Activated CD8-positive, alpha-beta T cell treated with anti-CD3 and anti-CD28 coated beads for 36 hours (primary cell): ENCODE measurements at regions of chr2 and their contacts with region 1.

Region 1: DNA sequence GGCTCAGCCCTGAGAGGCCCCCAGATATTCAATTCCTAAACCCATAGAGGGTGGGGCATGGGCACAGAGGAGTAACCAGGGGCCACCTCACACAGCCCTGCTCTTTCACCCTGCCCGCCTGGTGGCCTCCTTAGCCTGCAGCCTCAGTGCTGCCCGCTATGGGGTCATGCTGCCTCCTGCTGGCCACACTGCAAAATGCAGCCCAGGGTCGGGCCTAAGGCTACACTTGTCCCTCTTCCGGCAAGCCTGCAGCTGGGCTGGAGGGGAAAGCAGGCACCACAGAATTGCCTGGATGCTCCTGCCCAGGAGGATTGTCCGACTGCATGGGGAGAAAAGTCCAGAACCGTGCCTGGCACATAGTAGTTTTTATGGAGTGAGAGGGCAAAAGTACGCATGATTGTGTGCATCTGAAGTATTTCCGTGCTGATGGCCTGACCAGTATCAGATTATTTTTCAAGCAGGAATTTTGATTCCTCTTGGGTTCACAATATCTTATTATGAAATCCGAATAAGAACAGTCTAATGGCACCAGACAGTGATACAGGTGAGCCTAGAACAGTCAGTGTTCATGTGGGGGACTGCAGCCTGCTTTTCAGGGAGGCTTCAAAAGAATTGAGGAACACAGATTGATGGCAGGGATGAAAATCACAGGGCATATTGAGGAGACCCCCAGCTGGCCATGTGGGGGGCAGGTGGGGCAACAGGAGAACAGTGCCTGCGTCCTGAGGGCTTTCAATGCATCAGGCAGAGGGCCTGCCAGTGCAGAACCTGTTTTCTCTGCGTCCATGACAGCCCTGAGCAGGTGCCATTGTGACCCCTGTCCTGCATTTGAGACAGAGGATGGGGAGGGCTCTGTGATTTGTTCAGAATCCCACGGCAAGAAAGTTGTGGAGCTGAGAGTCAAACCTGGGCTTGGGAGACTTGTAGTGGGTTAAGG is 51.2 kb upstream of the ALPP start:
- DNase-seq: peak; percentile 90
- ATAC-seq: peak; percentile 84
- H3K4me3 Mint-ChIP-seq: no peak overlapping the region
- H3K27ac Mint-ChIP-seq: no peak overlapping the region
- H3K4me1 Mint-ChIP-seq: peaks cover 27% of the 10 kb centered on the region
- H3K27me3 Mint-ChIP-seq: no peaks in the 10 kb centered on the region
- CTCF ChIP-seq: peak; percentile 87

Region 2: GRCh38 chr2:231910771-231911170 is 416.6 kb before region 1 on chr2:
- CTCF ChIA-PET with region 1: interaction called, 13 read pairs
- POLR2A ChIA-PET with region 1: no interaction called
- intact Hi-C with region 1: no loop called
- DNase-seq: no peak
- ATAC-seq: no peak
- H3K4me3 Mint-ChIP-seq: no peak overlapping the region
- H3K27ac Mint-ChIP-seq: no peak overlapping the region
- H3K4me1 Mint-ChIP-seq: peaks cover 16% of the 10 kb centered on the region
- H3K27me3 Mint-ChIP-seq: no peaks in the 10 kb centered on the region
- CTCF ChIP-seq: no peak

Region 3: GRCh38 chr2:232133078-232133477 is 194.3 kb before region 1 on chr2:
- CTCF ChIA-PET with region 1: interaction called, 3 read pairs
- POLR2A ChIA-PET with region 1: no interaction called
- intact Hi-C with region 1: loop called (anchors 10 kb)
- DNase-seq: no peak
- ATAC-seq: no peak
- H3K4me3 Mint-ChIP-seq: no peak overlapping the region
- H3K27ac Mint-ChIP-seq: no peak overlapping the region
- H3K4me1 Mint-ChIP-seq: peaks cover 30% of the 10 kb centered on the region
- H3K27me3 Mint-ChIP-seq: no peaks in the 10 kb centered on the region
- CTCF ChIP-seq: peak; percentile 19

Region 4: DNA sequence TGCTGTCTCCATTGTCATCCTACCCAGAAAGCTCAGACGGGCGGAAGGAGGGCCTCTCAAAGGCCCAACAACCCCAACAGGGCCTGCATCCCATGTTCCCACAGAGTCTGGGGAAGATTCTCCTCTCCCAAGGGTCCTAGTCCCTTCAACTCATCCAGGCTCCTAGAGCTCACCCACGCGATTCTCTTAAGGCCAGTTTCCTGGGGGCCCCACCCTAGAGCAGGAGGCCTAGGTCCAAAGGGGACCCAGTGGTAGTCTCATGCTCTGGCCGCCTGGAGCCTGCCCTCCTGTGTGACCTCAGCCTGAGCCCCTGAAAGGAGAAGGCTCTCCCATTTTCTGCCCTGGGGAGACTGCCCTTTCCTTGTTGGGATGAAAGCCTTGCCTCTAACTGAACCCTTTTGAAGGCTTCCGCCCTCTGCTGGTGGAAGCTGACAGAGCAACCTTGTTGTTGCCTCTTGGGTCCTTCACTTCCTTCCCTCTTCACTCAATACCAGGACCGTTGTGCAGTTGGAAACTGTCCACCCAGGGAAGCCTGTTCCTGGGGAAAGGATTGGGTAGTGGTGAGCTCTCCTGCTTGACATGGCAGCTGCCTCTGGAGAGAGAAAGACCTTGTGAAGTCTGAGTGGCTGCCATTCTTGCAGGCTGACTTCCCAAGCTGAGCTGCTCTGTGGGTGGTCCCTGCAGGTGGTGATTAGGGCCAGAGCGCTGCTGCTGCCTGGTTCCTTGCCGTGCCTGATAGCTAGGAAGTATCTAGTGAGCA is 34.8 kb before region 1 on chr2:
- CTCF ChIA-PET with region 1: interaction called, 16 read pairs
- POLR2A ChIA-PET with region 1: no interaction called
- intact Hi-C with region 1: no loop called
- DNase-seq: peak; percentile 77
- ATAC-seq: peak; percentile 74
- H3K4me3 Mint-ChIP-seq: no peak overlapping the region
- H3K27ac Mint-ChIP-seq: no peak overlapping the region
- H3K4me1 Mint-ChIP-seq: peaks cover 10% of the 10 kb centered on the region
- H3K27me3 Mint-ChIP-seq: no peaks in the 10 kb centered on the region
- CTCF ChIP-seq: peak; percentile 81

Region 5: GRCh38 chr2:232310121-232310520 is 17.3 kb before region 1 on chr2:
- CTCF ChIA-PET with region 1: interaction called, 36 read pairs
- POLR2A ChIA-PET with region 1: interaction called, 5 read pairs
- intact Hi-C with region 1: no loop called
- DNase-seq: peak; percentile 75
- ATAC-seq: peak; percentile 70
- H3K4me3 Mint-ChIP-seq: peak overlapping the region; percentile 31
- H3K27ac Mint-ChIP-seq: peak overlapping the region; percentile 89
- H3K4me1 Mint-ChIP-seq: peaks cover 65% of the 10 kb centered on the region
- H3K27me3 Mint-ChIP-seq: no peaks in the 10 kb centered on the region
- CTCF ChIP-seq: no peak